HEK293T (cell line): ENCODE measurements at regions of chr13 and their contacts with region 1.

Region 1: DNA sequence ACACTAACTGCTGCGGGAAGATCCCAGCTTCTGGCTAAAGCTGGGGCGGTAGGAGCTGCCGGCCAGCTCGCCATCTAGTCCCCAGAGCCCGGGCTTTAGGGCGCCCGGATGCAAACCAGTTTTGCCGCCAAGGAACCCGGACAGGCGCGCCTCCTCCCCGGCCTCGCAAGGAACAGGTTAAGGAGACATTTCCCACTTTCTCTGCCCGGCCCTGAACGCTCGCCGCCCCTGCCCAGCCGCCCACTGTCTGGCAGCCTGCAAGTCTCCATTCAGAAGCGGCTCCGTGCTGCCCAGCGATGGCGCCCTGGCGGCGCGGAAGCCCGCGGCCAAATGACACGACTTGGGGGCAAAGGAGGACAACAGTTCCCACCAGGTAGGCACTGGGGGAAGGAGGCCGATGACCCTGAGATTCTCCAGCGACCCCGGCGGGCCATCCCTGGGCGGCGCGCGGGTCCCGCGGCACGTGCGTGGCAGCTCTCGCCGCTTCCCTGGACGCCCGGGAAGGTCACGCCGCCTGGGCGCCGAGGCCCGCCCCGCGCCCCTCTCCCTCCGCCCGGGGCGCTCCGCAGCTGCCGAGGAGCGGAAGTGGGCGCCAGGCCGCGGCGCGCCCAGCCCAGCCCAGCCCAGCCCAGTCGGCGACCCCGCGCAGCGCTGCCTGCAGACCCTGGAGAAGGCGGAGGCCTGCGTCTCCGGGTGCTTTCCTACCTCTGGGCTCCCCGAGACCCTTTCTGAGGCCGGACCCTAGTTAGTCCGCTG is 42.2 kb upstream of the HNRNPA1L2 start:
- DNase-seq: peak; percentile 62

Region 2: DNA sequence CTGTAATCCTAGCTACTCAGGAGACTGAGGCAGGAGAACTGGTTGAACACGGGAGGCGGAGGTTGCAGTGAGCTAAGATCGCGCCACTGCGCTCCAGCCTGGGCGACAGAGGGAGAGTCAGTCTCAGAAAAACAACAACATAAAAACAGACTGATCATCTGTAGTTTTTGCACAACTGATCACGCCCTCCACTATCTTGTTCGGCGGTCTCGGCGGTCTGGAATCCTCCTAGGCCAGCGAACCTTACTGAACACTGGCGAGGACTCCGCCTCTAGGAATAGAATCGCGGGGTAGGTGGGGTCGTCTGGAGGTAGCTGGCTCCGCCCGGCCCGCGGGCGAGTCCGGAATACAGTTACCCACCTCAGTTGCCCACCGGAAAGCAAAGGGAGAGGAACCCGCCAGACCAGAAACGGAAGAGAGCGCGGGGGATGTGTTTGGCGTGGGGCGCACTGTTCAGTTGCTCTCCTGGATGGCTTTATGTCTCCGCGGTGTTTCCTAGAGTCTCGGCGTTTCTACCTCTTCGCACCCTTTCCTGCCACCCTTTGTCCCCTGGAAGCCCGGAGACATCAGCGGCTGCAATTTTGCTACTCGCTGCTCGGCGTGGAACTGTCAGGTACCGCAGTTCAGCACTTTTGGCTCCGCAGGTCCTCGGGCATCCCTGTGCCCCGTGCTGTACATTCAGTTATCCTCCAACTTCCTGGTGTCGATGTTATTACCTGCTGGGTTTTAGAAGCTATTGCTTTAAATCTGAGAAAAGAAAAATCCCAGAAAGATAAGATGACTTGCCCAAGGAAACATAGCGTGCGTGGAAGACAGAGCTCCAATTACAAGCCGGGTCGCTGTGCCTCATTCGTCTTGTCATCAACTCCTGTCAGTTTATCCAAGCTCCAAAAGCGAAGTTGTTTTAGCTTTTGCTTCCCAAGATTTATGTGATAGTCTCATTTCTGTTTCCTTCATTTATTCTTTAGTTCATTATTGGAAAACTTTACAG is 17.3 kb after region 1 on chr13:
- CTCF ChIA-PET with region 1: no interaction called
- POLR2A ChIA-PET with region 1: interaction called, 20 read pairs
- DNase-seq: peak; percentile 85

Region 3: GRCh38 chr13:52652196-52652979 is 52.4 kb after region 1 on chr13 and contains the start of gene SUGT1:
- CTCF ChIA-PET with region 1: no interaction called
- POLR2A ChIA-PET with region 1: interaction called, 16 read pairs
- DNase-seq: peak; percentile 87